Left ventricle myocardium inferior (tissue), 1 donor: ENCODE measurements at regions of chr3 and their contacts with region 1.

Region 1: GRCh38 chr3:141452036-141452435 is 34.8 kb upstream of the RASA2 start:
- DNase-seq: no peak
- H3K4me3 ChIP-seq: no peak overlapping the region
- H3K27ac ChIP-seq: peak overlapping the region; percentile 30
- H3K4me1 ChIP-seq: peaks cover 64% of the 10 kb centered on the region
- H3K27me3 ChIP-seq: no peaks in the 10 kb centered on the region
- CTCF ChIP-seq: peak; percentile 83

Region 2: DNA sequence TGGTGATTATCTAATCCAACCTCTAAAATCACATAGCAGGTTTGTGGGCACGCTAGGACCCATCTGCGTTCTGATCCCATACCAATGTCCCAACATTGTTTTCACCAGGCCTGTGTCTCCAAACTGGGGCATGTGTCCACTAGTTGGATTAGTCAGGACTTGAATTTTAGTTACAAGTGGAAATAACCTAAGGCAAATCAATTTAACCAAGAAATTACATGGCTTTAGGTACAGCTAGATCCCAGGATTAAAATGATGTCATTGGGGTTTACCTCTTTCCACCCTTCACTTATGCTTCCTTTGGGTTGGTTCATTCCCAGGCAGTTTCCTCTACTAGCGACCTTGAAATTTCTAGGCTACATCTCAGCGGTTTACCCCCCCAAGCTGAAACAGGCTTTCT is 267.6 kb before region 1 on chr3:
- intact Hi-C with region 1: no loop called
- DNase-seq: no peak
- H3K4me3 ChIP-seq: no peak overlapping the region
- H3K27ac ChIP-seq: no peak overlapping the region
- H3K4me1 ChIP-seq: no peaks in the 10 kb centered on the region
- H3K27me3 ChIP-seq: no peaks in the 10 kb centered on the region
- CTCF ChIP-seq: no peak

Region 3: GRCh38 chr3:141311496-141312353 is 140.3 kb before region 1 on chr3:
- intact Hi-C with region 1: loop called (anchors 5 kb)
- DNase-seq: peak; percentile 98
- H3K4me3 ChIP-seq: peak overlapping the region; percentile 80
- H3K27ac ChIP-seq: peak overlapping the region; percentile 90
- H3K4me1 ChIP-seq: peaks cover 18% of the 10 kb centered on the region
- H3K27me3 ChIP-seq: no peaks in the 10 kb centered on the region
- CTCF ChIP-seq: peak; percentile 85

Region 4: DNA sequence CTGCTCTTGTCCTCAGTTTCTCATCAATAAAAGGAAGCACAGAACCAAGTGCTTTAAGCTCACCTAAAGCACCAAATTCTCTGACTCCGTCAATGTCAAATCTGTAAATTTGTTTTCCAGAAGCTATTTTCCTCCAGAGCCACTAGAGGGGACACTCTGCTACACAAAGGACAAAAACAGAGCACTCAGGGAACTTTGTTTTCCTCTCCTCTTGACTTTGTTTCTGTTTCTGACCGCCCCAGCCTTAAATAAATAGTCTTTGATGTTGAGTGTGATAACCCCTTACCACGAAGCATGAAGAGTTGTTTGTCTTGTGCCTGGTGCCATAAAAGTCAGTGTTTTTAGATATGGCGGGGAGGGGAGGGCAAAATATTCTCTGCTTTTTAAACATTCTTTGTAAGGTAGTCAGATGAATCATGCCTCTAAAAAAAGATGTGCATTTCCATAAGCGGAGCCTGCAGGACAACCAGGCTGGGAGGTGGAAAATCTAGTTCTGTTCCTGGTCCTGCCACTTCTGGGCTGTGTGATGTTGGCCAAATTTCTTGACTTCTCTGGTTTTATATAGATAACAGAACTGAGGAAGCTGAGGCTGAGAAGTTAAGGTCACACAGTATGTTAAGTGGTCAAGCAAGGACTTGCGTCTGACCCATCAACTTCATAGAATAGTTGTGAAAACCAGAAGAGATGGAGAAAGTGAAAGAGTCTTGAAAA is 91.0 kb before region 1 on chr3:
- intact Hi-C with region 1: loop called (anchors 2 kb)
- DNase-seq: no peak
- H3K4me3 ChIP-seq: peak overlapping the region; percentile 39
- H3K27ac ChIP-seq: peak overlapping the region; percentile 54
- H3K4me1 ChIP-seq: peaks cover 9% of the 10 kb centered on the region
- H3K27me3 ChIP-seq: no peaks in the 10 kb centered on the region
- CTCF ChIP-seq: peak; percentile 88